Right cardiac atrium (tissue), 5 donors: ENCODE measurements at regions of chr10 and their contacts with region 1.

Region 1: GRCh38 chr10:117216611-117217195 is 19.4 kb downstream of the KCNK18 start:
- DNase-seq: peak; percentile 66 to 89 (median 88)
- ATAC-seq: peak; percentile 80 to 92
- H3K4me3 ChIP-seq: peak overlapping the region; percentile 6
- H3K27ac ChIP-seq: no peak overlapping the region
- H3K4me1 ChIP-seq: no peaks in the 10 kb centered on the region
- H3K27me3 ChIP-seq: no peaks in the 10 kb centered on the region

Region 2: DNA sequence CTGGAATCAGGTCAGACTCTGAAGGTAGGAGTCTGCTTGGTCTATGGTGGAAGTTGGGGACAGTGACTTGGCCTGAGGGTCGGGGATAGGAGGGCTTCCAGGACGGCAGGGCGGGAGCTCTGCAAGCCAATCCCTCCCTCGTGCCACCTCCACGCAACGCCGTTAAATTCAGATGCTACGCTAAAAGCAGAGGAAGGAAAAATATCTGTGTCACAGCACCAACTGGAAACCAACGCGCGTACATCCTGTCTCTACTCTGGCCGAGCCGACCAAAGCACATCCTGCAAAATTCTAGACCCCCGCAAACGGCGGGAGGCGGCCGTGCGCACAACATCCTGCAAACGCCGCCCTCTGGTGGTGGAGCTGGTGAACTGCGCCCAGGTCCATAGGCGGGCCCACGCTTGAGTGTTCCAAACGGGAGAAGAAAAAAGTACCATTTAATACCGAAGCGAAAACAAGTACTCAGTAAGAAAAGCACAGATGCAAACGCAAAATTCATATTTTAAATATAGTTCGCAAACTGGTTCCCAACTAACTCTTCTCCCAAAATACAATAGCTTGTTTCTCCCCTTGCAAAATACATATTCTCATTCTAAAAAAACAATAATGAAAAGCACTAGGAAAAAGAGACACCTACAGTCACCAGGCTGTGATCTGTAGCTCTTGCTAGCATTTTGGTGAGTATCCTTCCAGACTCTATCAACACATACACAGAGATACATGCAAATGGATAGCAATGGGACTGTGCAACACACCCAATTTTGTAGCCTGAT is 428.6 kb before region 1 on chr10:
- intact Hi-C with region 1: no loop called
- DNase-seq: peak; percentile 79 to 92 (median 90)
- ATAC-seq: peak; percentile 77 to 88
- H3K4me3 ChIP-seq: peak overlapping the region; percentile 28
- H3K27ac ChIP-seq: no peak overlapping the region
- H3K4me1 ChIP-seq: no peaks in the 10 kb centered on the region
- H3K27me3 ChIP-seq: peaks cover under 1% of the 10 kb centered on the region

Region 3: GRCh38 chr10:117294039-117294645 is 77.4 kb after region 1 on chr10:
- intact Hi-C with region 1: no loop called
- DNase-seq: no peak
- ATAC-seq: no peak
- H3K4me3 ChIP-seq: no peak overlapping the region
- H3K27ac ChIP-seq: no peak overlapping the region
- H3K4me1 ChIP-seq: no peaks in the 10 kb centered on the region
- H3K27me3 ChIP-seq: no peaks in the 10 kb centered on the region

Region 4: DNA sequence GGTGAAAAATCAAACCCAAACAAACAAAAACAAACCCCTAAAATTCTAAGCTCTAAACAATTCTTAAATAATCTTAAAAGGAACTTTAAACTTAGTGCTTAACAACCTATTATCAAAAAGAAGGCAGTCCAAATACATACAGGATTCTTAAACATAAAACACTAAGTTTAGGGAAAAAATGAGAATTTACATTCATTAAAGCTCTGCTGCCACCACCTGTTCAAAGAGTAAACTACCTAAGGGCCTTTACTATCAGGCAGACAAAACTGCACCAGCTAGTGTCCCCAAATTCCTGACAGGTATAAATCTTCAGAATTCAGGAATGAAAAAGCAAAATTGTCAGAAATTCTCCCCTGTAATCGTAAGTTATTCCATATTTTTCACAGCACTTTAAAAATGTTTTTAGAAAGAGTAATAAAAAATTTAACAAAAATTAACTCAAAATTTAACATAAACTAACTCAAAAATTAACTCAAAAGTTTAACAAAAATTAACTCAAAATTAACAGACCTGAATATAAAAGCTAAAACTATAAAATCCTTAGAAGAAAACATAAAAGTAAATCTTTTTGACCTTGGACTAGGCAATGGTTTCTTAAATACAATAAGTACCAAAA is 103.5 kb after region 1 on chr10:
- intact Hi-C with region 1: loop called in 3 of 4 experiments (anchors 5 kb)
- DNase-seq: no peak
- ATAC-seq: no peak
- H3K4me3 ChIP-seq: no peak overlapping the region
- H3K27ac ChIP-seq: no peak overlapping the region
- H3K4me1 ChIP-seq: no peaks in the 10 kb centered on the region
- H3K27me3 ChIP-seq: no peaks in the 10 kb centered on the region

Region 5: DNA sequence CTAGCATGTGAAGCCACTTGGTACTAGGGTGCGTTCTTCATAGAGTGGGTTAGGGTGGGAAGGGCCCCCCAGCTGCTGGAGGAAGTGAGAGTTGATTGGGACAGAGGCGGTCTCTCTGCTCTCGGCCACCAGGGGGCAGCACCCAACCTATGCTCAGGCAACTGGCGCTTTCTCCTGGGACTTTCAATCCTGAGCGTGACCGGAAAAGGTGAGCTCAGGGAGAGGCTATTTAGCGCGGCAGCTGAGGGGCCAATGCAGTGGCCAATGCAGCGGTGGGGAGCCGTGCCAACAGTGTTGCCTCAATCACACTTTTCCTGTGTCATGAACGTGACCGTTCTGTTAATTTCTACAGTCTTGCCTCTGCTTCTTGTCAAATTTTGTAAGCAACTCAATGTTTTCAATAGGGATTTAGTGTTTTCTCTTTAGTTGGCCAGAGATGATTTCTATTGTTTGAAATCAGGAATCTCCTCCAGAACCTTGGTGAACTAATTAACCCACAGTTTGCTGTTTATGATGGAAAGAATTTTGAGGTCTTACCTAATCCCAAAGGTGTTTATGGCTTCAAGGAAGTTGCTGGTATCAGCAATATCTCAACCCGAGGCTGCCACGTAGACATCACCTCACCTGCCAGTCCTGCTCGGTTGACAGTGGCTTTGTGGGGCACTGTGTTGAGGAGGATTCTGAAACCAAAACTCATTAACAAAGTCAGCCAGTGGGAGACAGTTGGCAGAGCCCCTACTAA is 226.4 kb after region 1 on chr10:
- intact Hi-C with region 1: loop called in 1 of 4 experiments (anchors 10 kb)
- DNase-seq: peak; percentile 76 to 89 (median 86)
- ATAC-seq: peak; percentile 70 to 89
- H3K4me3 ChIP-seq: no peak overlapping the region
- H3K27ac ChIP-seq: no peak overlapping the region
- H3K4me1 ChIP-seq: peaks cover 2% of the 10 kb centered on the region
- H3K27me3 ChIP-seq: no peaks in the 10 kb centered on the region

Region 6: DNA sequence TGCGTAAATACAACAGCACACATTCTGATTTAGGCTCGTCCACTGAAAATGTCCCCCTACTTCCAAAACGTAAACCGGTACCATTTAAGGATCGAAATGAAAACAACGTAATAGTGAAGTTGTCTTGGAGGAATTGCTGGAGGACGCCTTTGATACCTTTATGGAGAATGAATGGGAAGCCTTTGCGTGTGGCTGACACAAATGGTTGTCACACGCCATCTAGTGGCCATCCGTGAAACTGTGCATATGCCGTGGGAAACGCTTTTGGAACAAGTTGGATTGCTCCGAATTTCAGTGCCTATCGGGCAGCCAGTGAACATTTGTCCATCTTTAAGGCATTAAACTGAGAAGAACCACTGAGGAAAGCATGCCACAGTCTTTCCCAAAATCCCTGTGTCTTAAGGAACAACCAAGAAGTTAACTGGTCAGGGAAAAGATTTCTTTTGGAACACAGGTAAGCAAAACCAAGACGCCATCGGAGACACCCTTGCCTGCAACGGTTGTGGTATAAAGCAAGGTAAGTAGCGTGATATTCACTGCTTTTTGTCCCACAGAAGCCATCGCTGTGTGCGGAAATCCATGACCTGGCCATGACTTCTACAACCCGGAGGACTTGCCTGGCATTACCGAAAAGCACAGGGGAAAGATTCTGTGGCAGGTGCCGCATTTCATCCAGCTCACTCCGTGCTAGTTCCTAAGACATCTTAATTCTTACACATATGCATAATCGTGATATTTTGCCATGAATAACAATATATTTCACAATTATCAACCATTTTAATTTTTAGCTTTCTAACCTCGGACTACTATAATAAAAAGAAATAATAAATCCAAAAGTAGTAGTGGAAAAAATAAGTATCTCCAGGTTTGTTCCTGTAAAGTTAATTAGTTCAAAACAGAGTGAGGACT is 1024.8 kb after region 1 on chr10:
- intact Hi-C with region 1: loop called in 1 of 4 experiments (anchors 10 kb)
- DNase-seq: peak; percentile 76 to 92 (median 84)
- ATAC-seq: peak; percentile 64 to 70
- H3K4me3 ChIP-seq: no peak overlapping the region
- H3K27ac ChIP-seq: no peak overlapping the region
- H3K4me1 ChIP-seq: no peaks in the 10 kb centered on the region
- H3K27me3 ChIP-seq: no peaks in the 10 kb centered on the region

Region 7: DNA sequence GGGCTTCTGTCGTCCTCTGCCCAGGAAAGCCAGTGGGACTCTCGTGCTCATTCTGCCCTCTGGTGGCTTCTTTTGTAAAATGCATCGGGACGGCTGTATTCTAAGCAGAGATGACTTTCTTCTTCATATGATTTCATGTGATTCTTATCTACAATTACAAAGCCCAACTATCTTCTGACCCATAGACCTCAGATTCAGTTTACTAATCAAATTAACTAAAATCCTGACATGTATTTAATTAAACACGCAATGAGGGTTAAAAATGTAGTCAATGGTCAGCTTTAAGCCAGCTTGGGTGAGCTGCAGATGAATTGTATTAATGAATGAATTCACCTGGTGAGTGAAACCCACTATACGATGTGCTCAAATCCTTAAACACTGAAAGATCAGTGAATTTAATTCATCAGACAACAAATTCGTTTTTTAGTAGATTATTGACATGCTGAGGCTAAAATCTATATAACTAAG is 1243.1 kb after region 1 on chr10:
- intact Hi-C with region 1: loop called in 1 of 4 experiments (anchors 10 kb)
- DNase-seq: peak; percentile 30 to 78 (median 70)
- ATAC-seq: peak; percentile 79 to 88
- H3K4me3 ChIP-seq: no peak overlapping the region
- H3K27ac ChIP-seq: no peak overlapping the region
- H3K4me1 ChIP-seq: no peaks in the 10 kb centered on the region
- H3K27me3 ChIP-seq: peaks cover 3% of the 10 kb centered on the region